ENCODE measurements at regions of chr11 and their contacts with region 1.

Region 1: DNA sequence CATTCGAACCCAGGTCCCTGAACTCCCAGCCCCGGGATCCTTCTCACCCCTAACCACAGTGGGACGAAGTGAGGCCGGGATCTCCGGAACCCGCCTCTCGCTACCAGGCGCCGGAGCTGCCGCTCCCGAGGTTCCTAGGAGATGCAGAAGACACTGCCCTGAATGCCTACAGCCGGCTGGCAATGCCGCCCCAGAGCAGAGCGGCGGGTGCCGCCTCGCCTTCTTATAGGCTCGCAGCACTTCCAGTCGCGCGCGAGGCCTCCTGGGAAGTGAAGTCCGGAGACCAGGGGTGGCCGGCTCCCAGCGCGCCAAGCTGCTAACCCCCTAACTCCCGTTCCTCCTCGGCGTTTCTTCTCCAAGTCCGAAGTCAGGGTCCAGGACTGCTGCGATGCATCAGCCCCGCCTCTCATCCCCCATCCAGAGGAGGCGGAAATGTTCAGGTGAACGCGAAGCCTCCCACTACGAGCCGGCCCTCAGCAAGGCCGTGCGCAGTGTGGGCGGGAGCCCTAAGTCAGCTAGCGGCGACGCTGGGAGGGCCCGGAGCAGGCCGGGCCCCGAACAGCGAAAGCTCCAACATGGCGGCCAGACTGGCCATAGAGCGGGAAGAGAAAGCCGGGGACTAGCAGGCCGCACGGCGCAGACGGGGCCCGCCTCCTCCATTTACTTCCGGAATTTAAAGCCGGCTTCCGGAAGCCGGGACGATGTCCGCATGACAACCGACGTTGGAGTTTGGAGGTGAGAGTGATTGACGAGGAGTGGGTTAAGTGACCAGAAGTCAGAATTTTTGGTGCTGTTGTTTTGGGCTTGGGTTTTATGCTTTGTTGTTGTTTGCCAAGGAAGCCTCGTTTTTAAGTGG is at the starts of genes CYB561A3 and TMEM138:
- H3K4me3 ChIP-seq: peak within 1 kb of the TSS; percentile 65
- H3K27ac ChIP-seq: peak within 1 kb of the TSS; percentile 94
- H3K4me1 ChIP-seq: peaks cover 2% of the 10 kb centered on the region; the same call in 1 of the 2 replicates
- CTCF ChIP-seq: no peak

Region 2: GRCh38 chr11:61183635-61184034 is 178.3 kb before region 1 on chr11:
- CTCF ChIA-PET with region 1: no interaction called
- POLR2A ChIA-PET with region 1: no interaction called
- H3K4me3 ChIP-seq: no peak overlapping the region
- H3K27ac ChIP-seq: no peak overlapping the region
- H3K4me1 ChIP-seq: no peaks in the 10 kb centered on the region
- CTCF ChIP-seq: no peak

Region 3: DNA sequence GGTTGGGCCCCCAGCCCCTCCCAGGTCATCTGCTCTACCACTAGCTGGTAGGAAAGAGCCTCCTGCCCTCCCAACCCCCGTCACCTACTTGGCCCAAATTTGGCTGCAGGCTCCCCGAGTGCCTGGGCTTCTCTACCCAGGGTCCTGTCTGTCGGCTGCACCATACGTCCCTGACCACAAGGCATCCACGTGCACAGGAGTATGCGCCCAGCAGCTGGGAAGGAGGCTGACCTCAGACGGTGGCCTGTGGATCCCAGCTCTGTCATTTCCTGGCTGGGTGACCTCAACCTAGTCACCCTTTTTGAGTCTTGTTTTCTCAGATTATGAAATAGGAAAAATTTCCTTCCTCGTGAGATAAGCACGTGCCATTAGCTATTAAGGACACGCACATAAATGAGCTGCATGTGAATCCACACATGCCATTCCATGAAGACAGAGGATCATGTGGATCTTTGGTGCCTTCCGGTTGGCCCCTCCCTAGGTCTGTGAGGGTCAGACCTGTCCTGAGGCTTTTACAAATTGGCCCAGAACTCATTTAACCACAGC is 13.9 kb before region 1 on chr11:
- CTCF ChIA-PET with region 1: no interaction called
- POLR2A ChIA-PET with region 1: interaction called, 37 read pairs
- H3K4me3 ChIP-seq: no peak overlapping the region
- H3K27ac ChIP-seq: no peak overlapping the region
- H3K4me1 ChIP-seq: no peaks in the 10 kb centered on the region
- CTCF ChIP-seq: no peak

Region 4: GRCh38 chr11:61378713-61379313 is 16.9 kb after region 1 on chr11:
- CTCF ChIA-PET with region 1: interaction called, 40 read pairs
- POLR2A ChIA-PET with region 1: interaction called, 22 read pairs
- H3K4me3 ChIP-seq: no peak overlapping the region
- H3K27ac ChIP-seq: no peak overlapping the region
- H3K4me1 ChIP-seq: no peaks in the 10 kb centered on the region
- CTCF ChIP-seq: no peak

Region 5: GRCh38 chr11:61384271-61385242 is 22.6 kb after region 1 on chr11:
- CTCF ChIA-PET with region 1: interaction called, 40 read pairs
- POLR2A ChIA-PET with region 1: interaction called, 22 read pairs
- H3K4me3 ChIP-seq: no peak overlapping the region
- H3K27ac ChIP-seq: no peak overlapping the region
- H3K4me1 ChIP-seq: no peaks in the 10 kb centered on the region
- CTCF ChIP-seq: no peak

Region 6: DNA sequence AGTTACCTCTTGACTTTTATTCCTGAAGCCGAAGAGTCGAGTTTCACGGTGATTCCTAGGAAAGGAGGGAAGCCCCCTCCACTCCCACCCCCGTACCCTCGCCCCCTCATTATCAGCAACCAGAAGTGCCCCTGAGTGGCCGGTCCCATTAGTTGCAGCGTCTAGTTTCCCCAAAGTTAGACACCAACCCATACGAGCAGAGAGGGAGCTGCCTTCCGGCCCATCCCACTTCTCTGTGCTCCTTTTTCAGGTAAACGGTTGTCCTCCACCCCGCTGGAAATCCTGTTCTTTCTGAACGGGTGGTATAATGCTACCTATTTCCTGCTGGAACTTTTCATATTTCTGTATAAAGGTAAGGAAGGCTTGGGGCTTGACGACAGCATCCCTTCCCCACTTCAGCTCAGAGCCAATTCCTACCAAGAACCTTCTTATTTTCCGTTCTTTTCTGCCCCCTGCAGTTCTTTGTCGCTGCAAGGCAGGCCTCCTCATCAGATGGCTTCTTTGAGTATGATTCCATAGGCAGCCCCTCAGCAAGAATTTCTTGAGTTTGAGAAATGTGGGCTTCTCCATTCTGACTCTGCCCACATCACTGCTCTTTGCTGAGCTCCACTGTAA is 31.2 kb after region 1 on chr11:
- CTCF ChIA-PET with region 1: interaction called, 4 read pairs
- POLR2A ChIA-PET with region 1: interaction called, 38 read pairs
- H3K4me3 ChIP-seq: peak overlapping the region; percentile 70
- H3K27ac ChIP-seq: peak overlapping the region; percentile 65
- H3K4me1 ChIP-seq: no peaks in the 10 kb centered on the region
- CTCF ChIP-seq: 0 out of 2 replicates have a peak, but pooled peaks have one; percentile 12

Region 7: DNA sequence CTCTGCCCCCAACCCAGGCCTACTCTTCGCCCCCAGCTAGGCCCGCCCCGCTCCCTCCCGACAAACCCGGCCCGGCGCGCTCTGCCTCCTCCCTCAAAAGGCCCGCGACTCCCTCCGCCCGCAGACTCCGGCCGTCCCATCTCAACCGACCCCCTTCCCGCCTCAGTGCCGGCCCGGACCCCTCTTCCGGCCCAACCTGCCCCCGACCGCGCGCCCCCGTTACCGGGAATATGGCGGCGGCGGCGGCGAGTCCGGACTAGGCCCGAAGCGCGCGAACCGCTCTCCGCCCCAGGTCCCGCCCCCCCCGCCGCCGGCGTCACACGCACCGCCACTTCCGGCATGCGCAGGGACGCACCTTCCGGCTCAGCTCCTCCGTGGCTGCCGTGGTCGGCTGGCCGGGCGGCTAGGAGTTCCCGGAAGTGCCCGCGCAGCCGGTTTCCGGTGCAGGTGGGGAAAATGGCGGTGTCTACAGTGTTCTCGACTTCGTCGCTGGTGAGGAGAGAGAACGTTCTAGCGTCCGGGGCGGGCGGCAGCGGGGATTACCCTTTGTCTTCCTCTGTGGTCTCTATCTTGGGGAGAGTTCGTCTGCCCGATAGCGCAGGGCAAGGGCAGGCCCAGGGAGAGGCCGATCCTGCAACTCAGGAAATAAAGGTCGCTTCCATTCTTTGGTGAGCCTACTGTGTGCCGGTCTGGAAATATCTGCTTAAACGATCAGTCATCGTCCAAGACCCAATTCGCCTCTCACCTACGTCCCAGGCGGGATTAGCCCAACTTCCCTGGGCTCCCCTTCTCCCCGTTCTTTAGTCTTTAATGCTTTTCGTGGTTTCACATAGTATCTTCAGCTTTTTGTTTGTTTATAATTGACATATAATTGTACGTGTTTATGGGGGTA is 68.0 kb after region 1 on chr11 and contains the starts of genes CPSF7 and SDHAF2:
- CTCF ChIA-PET with region 1: no interaction called
- POLR2A ChIA-PET with region 1: interaction called, 16 read pairs
- H3K4me3 ChIP-seq: peak within 1 kb of the TSS; percentile 99
- H3K27ac ChIP-seq: peak within 1 kb of the TSS; percentile 99
- H3K4me1 ChIP-seq: no peaks in the 10 kb centered on the region
- CTCF ChIP-seq: peak; percentile 49

Region 8: DNA sequence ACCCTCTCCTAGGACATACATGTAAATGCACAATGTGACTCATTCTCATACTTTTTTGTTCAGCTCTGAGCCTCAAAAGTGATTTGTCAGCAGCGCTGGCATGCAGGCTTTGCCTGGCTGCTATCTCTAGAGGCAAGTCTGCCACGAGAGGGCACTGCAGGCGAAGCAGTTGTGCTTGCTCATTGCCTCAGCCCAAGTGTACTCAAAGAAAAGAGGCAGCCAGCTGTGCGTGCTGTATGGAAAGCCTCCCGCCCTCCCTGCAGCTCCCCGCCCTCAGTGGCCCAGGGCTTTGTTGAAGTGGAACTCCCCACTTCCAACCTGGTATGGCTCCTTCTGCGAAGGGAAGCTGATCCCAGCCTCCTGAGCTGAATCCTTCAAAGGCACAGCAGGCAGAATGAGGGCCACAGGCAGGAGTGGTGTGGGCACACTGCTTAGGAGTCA is 84.3 kb after region 1 on chr11:
- CTCF ChIA-PET with region 1: no interaction called
- POLR2A ChIA-PET with region 1: no interaction called
- H3K4me3 ChIP-seq: no peak overlapping the region
- H3K27ac ChIP-seq: no peak overlapping the region
- H3K4me1 ChIP-seq: no peaks in the 10 kb centered on the region
- CTCF ChIP-seq: peak; percentile 77

Measured in HEK293 (cell line).